PC-9 (cell line): ENCODE measurements at regions of chr11 and their contacts with region 1.

Region 1: GRCh38 chr11:8870411-8871170 is 40.4 kb upstream of the AKIP1 start:
- DNase-seq: peak; percentile 41 to 53
- H3K4me3 ChIP-seq: peak overlapping the region; percentile 60
- H3K27ac ChIP-seq: no peak overlapping the region
- H3K4me1 ChIP-seq: peaks cover 45% of the 10 kb centered on the region
- H3K27me3 ChIP-seq: no peaks in the 10 kb centered on the region
- CTCF ChIP-seq: no peak

Region 2: DNA sequence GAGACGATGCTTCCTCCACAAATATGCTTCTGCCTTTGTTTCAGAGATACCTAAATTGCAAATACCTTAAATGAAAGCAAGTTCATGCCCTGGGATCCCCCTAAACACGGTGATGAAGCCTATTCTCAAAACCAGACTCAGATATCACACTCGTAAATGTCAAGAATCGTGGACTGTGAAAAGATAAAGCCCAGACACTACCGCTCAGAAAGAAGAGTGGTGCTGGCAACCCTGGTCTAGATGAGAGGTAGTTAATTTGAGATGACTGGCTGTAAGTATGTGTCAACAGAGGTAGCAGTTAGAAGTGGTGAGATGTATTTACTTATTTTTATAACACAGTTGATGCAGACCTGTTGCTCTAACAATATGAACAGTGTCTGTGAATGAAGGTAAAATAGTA is 1166.9 kb before region 1 on chr11:
- CTCF ChIA-PET with region 1: no interaction called
- POLR2A ChIA-PET with region 1: no interaction called
- intact Hi-C with region 1: no loop called
- DNase-seq: no peak
- H3K4me3 ChIP-seq: no peak overlapping the region
- H3K27ac ChIP-seq: no peak overlapping the region
- H3K4me1 ChIP-seq: no peaks in the 10 kb centered on the region
- H3K27me3 ChIP-seq: no peaks in the 10 kb centered on the region
- CTCF ChIP-seq: no peak

Region 3: GRCh38 chr11:8652140-8652539 is 218.5 kb before region 1 on chr11:
- CTCF ChIA-PET with region 1: no interaction called
- POLR2A ChIA-PET with region 1: interaction called, 21 read pairs
- intact Hi-C with region 1: no loop called
- DNase-seq: peak in 1 of 2 experiments; percentile 59
- H3K4me3 ChIP-seq: no peak overlapping the region
- H3K27ac ChIP-seq: no peak overlapping the region
- H3K4me1 ChIP-seq: no peaks in the 10 kb centered on the region
- H3K27me3 ChIP-seq: no peaks in the 10 kb centered on the region
- CTCF ChIP-seq: no peak

Region 4: GRCh38 chr11:8745431-8746253 is 124.9 kb before region 1 on chr11:
- CTCF ChIA-PET with region 1: no interaction called
- POLR2A ChIA-PET with region 1: interaction called, 10 read pairs
- intact Hi-C with region 1: no loop called
- DNase-seq: no peak
- H3K4me3 ChIP-seq: no peak overlapping the region
- H3K27ac ChIP-seq: no peak overlapping the region
- H3K4me1 ChIP-seq: peaks cover 10% of the 10 kb centered on the region
- H3K27me3 ChIP-seq: no peaks in the 10 kb centered on the region
- CTCF ChIP-seq: no peak

Region 5: GRCh38 chr11:8813658-8814057 is 56.9 kb before region 1 on chr11:
- CTCF ChIA-PET with region 1: interaction called, 8 read pairs
- POLR2A ChIA-PET with region 1: interaction called, 3 read pairs
- intact Hi-C with region 1: loop called (anchors 1 kb)
- DNase-seq: peak; percentile 49 to 63
- H3K4me3 ChIP-seq: no peak overlapping the region
- H3K27ac ChIP-seq: peak overlapping the region; percentile 81
- H3K4me1 ChIP-seq: peaks cover 41% of the 10 kb centered on the region
- H3K27me3 ChIP-seq: no peaks in the 10 kb centered on the region
- CTCF ChIP-seq: peak; percentile 78

Region 6: GRCh38 chr11:8832571-8833260 is 37.9 kb before region 1 on chr11:
- CTCF ChIA-PET with region 1: no interaction called
- POLR2A ChIA-PET with region 1: no interaction called
- intact Hi-C with region 1: loop called (anchors 5 kb)
- DNase-seq: peak; percentile 67 to 73
- H3K4me3 ChIP-seq: no peak overlapping the region
- H3K27ac ChIP-seq: peak overlapping the region; percentile 67
- H3K4me1 ChIP-seq: peaks cover 28% of the 10 kb centered on the region
- H3K27me3 ChIP-seq: no peaks in the 10 kb centered on the region
- CTCF ChIP-seq: no peak